ENCODE measurements at regions of chr11 and their contacts with region 1.

Region 1: GRCh38 chr11:35165423-35166368 is 26.7 kb downstream of the CD44 start:
- DNase-seq: peak; percentile 55
- ATAC-seq: peak; percentile 68
- H3K4me3 Mint-ChIP-seq: peak overlapping the region; percentile 76
- H3K27ac Mint-ChIP-seq: peak overlapping the region; percentile 91
- H3K4me1 Mint-ChIP-seq: peaks cover 100% of the 10 kb centered on the region
- H3K27me3 Mint-ChIP-seq: no peaks in the 10 kb centered on the region
- CTCF ChIP-seq: no peak

Region 2: DNA sequence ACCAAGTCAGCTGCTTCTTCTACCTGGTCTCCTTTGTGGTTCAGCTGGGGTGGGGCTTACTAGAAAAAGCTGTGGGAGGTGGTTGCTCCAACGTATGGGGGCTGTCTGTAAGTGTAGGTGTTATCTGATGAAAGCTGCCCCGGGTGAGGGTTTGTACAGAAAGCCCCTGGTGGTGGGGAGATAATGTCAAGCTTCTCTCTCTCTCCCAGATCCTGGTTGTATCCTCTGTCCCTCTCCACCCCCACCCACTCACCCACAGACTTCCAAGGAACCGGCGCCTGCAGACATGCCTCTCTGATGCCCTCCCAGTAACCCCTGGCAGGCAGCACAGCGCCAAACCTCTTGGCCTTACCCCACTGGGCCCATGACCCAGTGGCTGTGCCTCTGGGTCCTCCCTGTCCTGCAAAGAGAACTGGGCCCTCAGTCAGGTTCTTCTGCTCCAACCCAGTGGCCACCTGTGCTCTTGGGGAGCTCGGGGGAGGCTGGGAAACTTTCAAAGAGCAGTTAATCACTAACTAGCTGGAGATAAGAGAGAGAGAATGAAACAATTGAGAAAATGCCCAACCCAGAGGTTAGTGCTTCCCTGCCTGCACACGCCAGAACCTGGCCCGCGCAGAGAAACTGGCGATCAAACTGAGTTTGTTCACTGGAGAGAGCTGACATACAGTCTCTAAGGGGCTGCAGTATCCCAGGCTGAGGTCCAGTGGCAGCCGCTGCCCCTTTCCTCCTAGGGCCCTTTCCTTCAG is 565.2 kb before region 1 on chr11:
- CTCF ChIA-PET with region 1: no interaction called
- POLR2A ChIA-PET with region 1: no interaction called
- intact Hi-C with region 1: no loop called
- DNase-seq: no peak
- ATAC-seq: no peak
- H3K4me3 Mint-ChIP-seq: no peak overlapping the region
- H3K27ac Mint-ChIP-seq: no peak overlapping the region
- H3K4me1 Mint-ChIP-seq: peaks cover 5% of the 10 kb centered on the region
- H3K27me3 Mint-ChIP-seq: no peaks in the 10 kb centered on the region
- CTCF ChIP-seq: no peak

Region 3: DNA sequence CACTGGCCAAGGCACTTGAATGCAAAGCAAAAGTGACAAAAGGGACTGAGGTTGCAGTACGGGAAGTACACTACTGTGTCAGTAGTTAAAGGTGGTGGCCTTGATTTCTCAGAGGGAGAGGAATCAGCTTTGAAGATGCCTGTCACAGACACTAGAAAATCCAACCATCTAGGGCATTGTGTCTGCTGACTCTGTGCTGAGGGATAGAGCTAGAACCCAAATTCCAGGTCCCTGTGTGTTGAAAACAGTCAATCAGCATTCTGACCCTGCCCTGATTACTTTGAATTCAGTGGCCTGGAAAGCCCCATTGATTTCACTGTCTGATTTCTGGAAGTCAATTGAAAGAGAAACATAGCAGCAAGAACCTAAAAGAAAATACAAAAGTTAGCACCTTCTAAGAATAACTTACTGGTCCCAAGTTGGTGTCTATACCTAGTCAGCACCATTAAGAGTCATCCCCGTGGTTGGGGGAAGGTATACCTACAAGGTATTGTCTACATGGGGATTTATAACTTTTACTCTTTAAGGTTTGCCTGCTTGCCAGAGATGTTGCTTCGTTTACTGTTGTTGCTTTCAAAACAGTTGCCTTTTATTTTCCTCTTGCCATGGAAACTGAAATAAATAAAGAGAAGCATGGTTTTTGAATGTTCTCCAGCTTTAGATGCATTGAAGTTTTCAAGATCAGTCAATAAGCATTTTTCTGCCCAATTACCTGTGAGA is 152.0 kb before region 1 on chr11:
- CTCF ChIA-PET with region 1: no interaction called
- POLR2A ChIA-PET with region 1: no interaction called
- intact Hi-C with region 1: no loop called
- DNase-seq: no peak
- ATAC-seq: peak; percentile 47
- H3K4me3 Mint-ChIP-seq: peak overlapping the region; percentile 59
- H3K27ac Mint-ChIP-seq: peak overlapping the region; percentile 90
- H3K4me1 Mint-ChIP-seq: peaks cover 43% of the 10 kb centered on the region
- H3K27me3 Mint-ChIP-seq: no peaks in the 10 kb centered on the region
- CTCF ChIP-seq: no peak

Region 4: GRCh38 chr11:35116762-35117640 is 48.7 kb before region 1 on chr11:
- CTCF ChIA-PET with region 1: interaction called, 3 read pairs
- POLR2A ChIA-PET with region 1: no interaction called
- intact Hi-C with region 1: loop called (anchors 2 kb)
- DNase-seq: no peak
- ATAC-seq: no peak
- H3K4me3 Mint-ChIP-seq: no peak overlapping the region
- H3K27ac Mint-ChIP-seq: peak overlapping the region; percentile 66
- H3K4me1 Mint-ChIP-seq: peaks cover 85% of the 10 kb centered on the region
- H3K27me3 Mint-ChIP-seq: no peaks in the 10 kb centered on the region
- CTCF ChIP-seq: no peak

Region 5: GRCh38 chr11:35144136-35144741 is 21.5 kb before region 1 on chr11:
- CTCF ChIA-PET with region 1: interaction called, 8 read pairs
- POLR2A ChIA-PET with region 1: interaction called, 50 read pairs
- intact Hi-C with region 1: loop called (anchors 1 kb)
- DNase-seq: peak; percentile 63
- ATAC-seq: peak; percentile 62
- H3K4me3 Mint-ChIP-seq: peak overlapping the region; percentile 97
- H3K27ac Mint-ChIP-seq: peak overlapping the region; percentile 90
- H3K4me1 Mint-ChIP-seq: peaks cover 81% of the 10 kb centered on the region
- H3K27me3 Mint-ChIP-seq: no peaks in the 10 kb centered on the region
- CTCF ChIP-seq: no peak

Region 6: DNA sequence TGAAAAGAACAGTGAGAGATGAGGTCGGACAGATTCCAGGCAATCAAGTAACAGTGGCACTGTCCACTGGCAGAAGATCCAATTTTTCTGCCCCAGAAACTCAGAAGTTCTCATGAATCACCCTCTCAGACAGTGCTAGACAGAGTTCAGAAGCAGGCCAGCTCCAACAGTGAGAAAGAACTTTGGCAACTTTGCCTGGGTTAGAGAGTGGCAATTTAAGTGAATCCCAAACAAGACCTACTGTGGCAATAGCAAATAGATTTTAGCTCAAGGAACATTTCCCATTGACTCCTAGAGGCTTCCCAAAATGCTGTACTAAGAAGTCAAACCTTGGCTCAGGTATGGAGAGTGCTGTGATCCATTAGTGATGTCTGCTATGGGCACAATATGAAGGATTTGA is 14.5 kb before region 1 on chr11:
- CTCF ChIA-PET with region 1: interaction called, 8 read pairs
- POLR2A ChIA-PET with region 1: interaction called, 8 read pairs
- intact Hi-C with region 1: loop called (anchors 1 kb)
- DNase-seq: no peak
- ATAC-seq: no peak
- H3K4me3 Mint-ChIP-seq: peak overlapping the region; percentile 11
- H3K27ac Mint-ChIP-seq: peak overlapping the region; percentile 57
- H3K4me1 Mint-ChIP-seq: peaks cover 99% of the 10 kb centered on the region
- H3K27me3 Mint-ChIP-seq: no peaks in the 10 kb centered on the region
- CTCF ChIP-seq: no peak

Region 7: GRCh38 chr11:35182317-35182939 is 16.7 kb after region 1 on chr11:
- CTCF ChIA-PET with region 1: interaction called, 4 read pairs
- POLR2A ChIA-PET with region 1: interaction called, 4 read pairs
- intact Hi-C with region 1: loop called (anchors 2 kb)
- DNase-seq: no peak
- ATAC-seq: peak; percentile 68
- H3K4me3 Mint-ChIP-seq: peak overlapping the region; percentile 68
- H3K27ac Mint-ChIP-seq: peak overlapping the region; percentile 80
- H3K4me1 Mint-ChIP-seq: peaks cover 79% of the 10 kb centered on the region
- H3K27me3 Mint-ChIP-seq: no peaks in the 10 kb centered on the region
- CTCF ChIP-seq: no peak